ENCODE measurements at regions of chr1 and their contacts with region 1.

Region 1: DNA sequence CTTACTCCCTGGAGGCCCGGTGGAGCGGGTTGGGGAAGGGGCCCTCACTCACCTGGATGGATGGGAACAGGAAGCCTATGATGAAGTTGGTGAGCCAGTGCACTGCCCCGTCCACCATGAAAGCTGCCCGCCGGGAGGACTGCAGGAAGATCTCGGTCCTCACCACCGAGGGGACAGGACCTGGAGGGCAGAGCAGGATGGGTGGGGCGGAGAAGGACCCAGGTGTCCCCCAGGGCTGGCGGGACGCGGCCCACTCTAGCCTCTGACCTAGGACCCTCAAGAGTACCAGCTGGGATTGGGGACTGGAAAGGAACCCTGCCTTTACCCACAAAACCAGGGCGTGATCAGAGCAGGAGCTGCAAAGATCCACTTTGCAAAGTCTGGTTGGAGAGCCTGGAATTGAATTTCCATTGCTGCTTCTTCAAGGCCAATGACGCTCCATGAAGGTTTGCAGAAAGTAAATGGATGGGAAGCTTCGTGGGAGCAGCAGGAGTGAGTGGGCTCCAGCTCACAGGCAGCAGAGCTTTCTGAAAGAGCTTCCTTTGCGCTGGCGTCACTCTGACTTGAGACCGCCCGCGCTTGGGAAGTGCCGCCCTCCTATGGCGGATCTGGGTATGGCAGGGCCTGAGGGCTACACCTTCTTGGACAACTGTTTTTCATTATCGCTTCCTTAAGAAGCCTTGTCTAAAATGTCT is 21.4 kb downstream of the SLC2A7 start:
- DNase-seq: peak; percentile 90
- H3K4me3 Mint-ChIP-seq: no peak overlapping the region
- H3K27ac Mint-ChIP-seq: no peak overlapping the region
- H3K4me1 Mint-ChIP-seq: no peaks in the 10 kb centered on the region
- H3K27me3 Mint-ChIP-seq: no peaks in the 10 kb centered on the region

Region 2: DNA sequence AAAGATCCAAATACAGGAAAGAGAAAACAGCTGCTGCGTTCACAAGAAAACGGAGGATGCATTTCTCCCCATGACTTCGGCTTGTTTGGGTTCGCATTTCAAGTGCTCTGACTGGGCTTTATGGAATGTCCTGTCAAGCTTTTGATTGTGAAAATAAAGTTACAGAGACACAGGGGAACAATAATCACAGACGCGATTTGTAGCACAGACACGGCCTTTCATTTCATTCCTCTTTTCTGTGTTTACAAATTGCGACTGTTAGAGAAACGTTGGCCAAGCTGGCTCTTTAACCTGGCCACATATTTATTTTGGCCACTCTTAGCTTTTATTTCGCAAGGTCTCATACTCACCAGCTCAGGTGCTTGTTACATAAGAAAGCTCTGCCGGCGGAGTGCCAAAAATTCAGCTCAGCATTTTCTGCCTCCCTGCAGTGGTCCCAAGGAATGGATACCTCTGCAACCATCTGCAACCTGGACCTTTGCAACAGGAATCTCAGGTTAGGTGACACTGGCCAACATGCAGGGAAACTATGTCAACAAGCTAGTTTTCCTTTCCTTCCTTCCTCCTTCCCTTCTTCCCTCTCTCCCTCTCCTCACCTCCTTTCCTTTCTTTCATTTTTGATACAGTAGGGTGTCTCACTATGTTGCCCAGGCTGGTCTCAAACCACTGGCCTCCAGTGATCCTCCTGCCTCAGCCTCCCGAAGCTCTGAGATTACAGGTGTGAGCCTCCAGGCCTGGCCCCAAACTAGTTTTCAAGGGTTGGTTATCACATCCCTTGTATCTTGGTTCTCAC is 745.2 kb before region 1 on chr1:
- CTCF ChIA-PET with region 1: no interaction called
- POLR2A ChIA-PET with region 1: no interaction called
- intact Hi-C with region 1: no loop called
- DNase-seq: no peak
- H3K4me3 Mint-ChIP-seq: no peak overlapping the region
- H3K27ac Mint-ChIP-seq: no peak overlapping the region
- H3K4me1 Mint-ChIP-seq: no peaks in the 10 kb centered on the region
- H3K27me3 Mint-ChIP-seq: peaks cover 2% of the 10 kb centered on the region

Region 3: GRCh38 chr1:8858888-8859706 is 145.8 kb before region 1 on chr1:
- CTCF ChIA-PET with region 1: interaction called, 21 read pairs
- POLR2A ChIA-PET with region 1: interaction called, 4 read pairs
- intact Hi-C with region 1: no loop called
- DNase-seq: peak; percentile 56
- H3K4me3 Mint-ChIP-seq: no peak overlapping the region
- H3K27ac Mint-ChIP-seq: peak overlapping the region; percentile 84
- H3K4me1 Mint-ChIP-seq: peaks cover 33% of the 10 kb centered on the region
- H3K27me3 Mint-ChIP-seq: no peaks in the 10 kb centered on the region

Region 4: GRCh38 chr1:8899076-8899475 is 105.8 kb before region 1 on chr1:
- CTCF ChIA-PET with region 1: interaction called, 10 read pairs
- POLR2A ChIA-PET with region 1: no interaction called
- intact Hi-C with region 1: no loop called
- DNase-seq: no peak
- H3K4me3 Mint-ChIP-seq: no peak overlapping the region
- H3K27ac Mint-ChIP-seq: peak overlapping the region; percentile 99
- H3K4me1 Mint-ChIP-seq: peaks cover 47% of the 10 kb centered on the region
- H3K27me3 Mint-ChIP-seq: no peaks in the 10 kb centered on the region

Region 5: GRCh38 chr1:8926707-8927694 is 77.8 kb before region 1 on chr1:
- CTCF ChIA-PET with region 1: interaction called, 224 read pairs
- POLR2A ChIA-PET with region 1: no interaction called
- intact Hi-C with region 1: no loop called
- DNase-seq: no peak
- H3K4me3 Mint-ChIP-seq: no peak overlapping the region
- H3K27ac Mint-ChIP-seq: no peak overlapping the region
- H3K4me1 Mint-ChIP-seq: no peaks in the 10 kb centered on the region
- H3K27me3 Mint-ChIP-seq: no peaks in the 10 kb centered on the region

Region 6: DNA sequence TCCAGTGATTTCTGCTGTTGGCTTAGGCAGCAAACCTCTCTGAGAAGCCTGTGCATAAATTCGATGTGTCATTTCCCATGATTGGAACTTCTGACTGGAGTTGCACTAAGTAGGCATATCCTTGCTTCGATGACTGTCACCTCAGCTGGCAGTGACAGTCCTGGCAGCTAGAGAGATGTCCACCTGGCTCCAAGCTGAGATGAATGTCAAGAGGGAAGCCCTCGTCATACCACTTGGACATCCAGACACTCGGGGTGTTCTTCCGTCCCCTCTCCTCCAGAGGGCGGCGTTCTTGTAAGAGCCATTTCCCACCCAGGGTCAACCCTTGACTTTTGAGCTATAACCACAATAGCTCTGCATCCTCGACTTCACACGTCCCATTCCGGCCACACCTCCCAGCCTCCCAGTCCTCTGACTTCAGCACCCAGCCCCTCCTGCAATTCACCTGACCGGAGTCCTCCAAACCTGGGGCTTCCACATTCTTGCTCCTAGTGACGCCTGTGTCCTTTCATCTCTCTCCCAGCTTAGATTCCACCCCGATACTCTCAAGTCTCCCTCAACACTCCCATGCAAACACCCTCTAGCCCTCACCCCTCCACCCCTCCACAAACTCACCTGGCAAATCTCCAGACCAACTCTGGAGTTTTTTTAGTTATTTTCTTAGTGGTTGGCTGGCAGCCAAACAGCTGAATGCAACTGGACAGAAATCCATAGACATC is 41.9 kb before region 1 on chr1:
- CTCF ChIA-PET with region 1: interaction called, 29 read pairs
- POLR2A ChIA-PET with region 1: no interaction called
- intact Hi-C with region 1: no loop called
- DNase-seq: peak; percentile 66
- H3K4me3 Mint-ChIP-seq: no peak overlapping the region
- H3K27ac Mint-ChIP-seq: peak overlapping the region; percentile 52
- H3K4me1 Mint-ChIP-seq: peaks cover 64% of the 10 kb centered on the region
- H3K27me3 Mint-ChIP-seq: no peaks in the 10 kb centered on the region

Region 7: GRCh38 chr1:8976896-8977450 is 27.9 kb before region 1 on chr1:
- CTCF ChIA-PET with region 1: no interaction called
- POLR2A ChIA-PET with region 1: no interaction called
- intact Hi-C with region 1: no loop called
- DNase-seq: no peak
- H3K4me3 Mint-ChIP-seq: no peak overlapping the region
- H3K27ac Mint-ChIP-seq: no peak overlapping the region
- H3K4me1 Mint-ChIP-seq: peaks cover 7% of the 10 kb centered on the region
- H3K27me3 Mint-ChIP-seq: no peaks in the 10 kb centered on the region

Region 8: GRCh38 chr1:8992936-8993687 is 11.7 kb before region 1 on chr1:
- CTCF ChIA-PET with region 1: interaction called, 93 read pairs
- POLR2A ChIA-PET with region 1: interaction called, 3 read pairs
- intact Hi-C with region 1: no loop called
- DNase-seq: peak; percentile 27
- H3K4me3 Mint-ChIP-seq: no peak overlapping the region
- H3K27ac Mint-ChIP-seq: no peak overlapping the region
- H3K4me1 Mint-ChIP-seq: peaks cover 6% of the 10 kb centered on the region
- H3K27me3 Mint-ChIP-seq: no peaks in the 10 kb centered on the region

Region 9: DNA sequence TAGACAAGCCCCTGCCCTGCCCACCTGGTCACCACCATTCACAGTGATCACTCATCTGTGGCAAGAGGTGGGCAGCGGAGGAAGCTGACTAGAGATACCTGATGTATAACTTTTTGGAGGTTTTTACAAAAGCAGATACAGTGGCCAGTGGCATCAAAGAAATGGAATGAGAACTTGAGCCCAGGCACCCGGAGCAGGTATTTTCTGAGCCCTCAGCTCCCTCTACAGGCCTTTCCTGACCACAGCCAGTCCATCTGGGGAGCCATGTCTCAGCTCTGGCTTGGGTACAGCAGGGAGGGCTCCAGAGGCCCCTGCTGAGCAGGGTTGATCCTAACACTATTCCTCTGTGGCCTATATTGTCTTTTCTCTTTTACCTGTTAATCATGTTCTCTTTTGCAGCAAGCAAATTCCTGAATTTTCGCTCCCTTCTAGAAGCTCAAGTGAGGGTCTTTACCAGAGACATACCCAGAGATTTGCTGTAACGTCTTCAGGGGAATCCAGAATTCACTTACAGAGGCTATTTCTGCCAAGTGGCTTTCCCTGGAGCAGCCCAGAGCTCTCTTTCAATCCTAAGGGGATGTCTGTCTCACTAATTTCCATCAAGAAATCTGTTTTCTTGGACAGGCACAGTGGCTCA is 96.8 kb after region 1 on chr1:
- CTCF ChIA-PET with region 1: interaction called, 12 read pairs
- POLR2A ChIA-PET with region 1: no interaction called
- intact Hi-C with region 1: loop called (anchors 5 kb)
- DNase-seq: peak; percentile 45
- H3K4me3 Mint-ChIP-seq: no peak overlapping the region
- H3K27ac Mint-ChIP-seq: no peak overlapping the region
- H3K4me1 Mint-ChIP-seq: no peaks in the 10 kb centered on the region
- H3K27me3 Mint-ChIP-seq: no peaks in the 10 kb centered on the region

Measured in activated CD4-positive, alpha-beta memory T cell treated with anti-CD3 and anti-CD28 coated beads for 36 hours (primary cell).